ENCODE measurements at regions of chr12 and their contacts with region 1.

Region 1: GRCh38 chr12:109573029-109573913 is at the starts of genes MMAB and MVK:
- DNase-seq: peak; percentile 92
- ATAC-seq: peak; percentile 94
- H3K4me3 Mint-ChIP-seq: peak within 1 kb of the TSS; percentile 93
- H3K27ac Mint-ChIP-seq: peak within 1 kb of the TSS; percentile 90
- H3K4me1 Mint-ChIP-seq: peaks cover 25% of the 10 kb centered on the region
- H3K27me3 Mint-ChIP-seq: no peaks in the 10 kb centered on the region
- CTCF ChIP-seq: no peak
- total RNA-seq, gene MMAB: 62.8 and 63.3 TPM in 2 replicates
- total RNA-seq, gene MVK: 28.5 and 30.3 TPM in 2 replicates

Region 2: GRCh38 chr12:107903341-107904061 is 1669.8 kb before region 1 on chr12:
- CTCF ChIA-PET with region 1: no interaction called
- POLR2A ChIA-PET with region 1: no interaction called
- intact Hi-C with region 1: loop called (anchors 10 kb)
- DNase-seq: peak; percentile 64
- ATAC-seq: peak; percentile 99
- H3K4me3 Mint-ChIP-seq: peak overlapping the region; percentile 81
- H3K27ac Mint-ChIP-seq: peak overlapping the region; percentile 66
- H3K4me1 Mint-ChIP-seq: peaks cover 12% of the 10 kb centered on the region
- H3K27me3 Mint-ChIP-seq: peaks cover 27% of the 10 kb centered on the region
- CTCF ChIP-seq: no peak

Region 3: DNA sequence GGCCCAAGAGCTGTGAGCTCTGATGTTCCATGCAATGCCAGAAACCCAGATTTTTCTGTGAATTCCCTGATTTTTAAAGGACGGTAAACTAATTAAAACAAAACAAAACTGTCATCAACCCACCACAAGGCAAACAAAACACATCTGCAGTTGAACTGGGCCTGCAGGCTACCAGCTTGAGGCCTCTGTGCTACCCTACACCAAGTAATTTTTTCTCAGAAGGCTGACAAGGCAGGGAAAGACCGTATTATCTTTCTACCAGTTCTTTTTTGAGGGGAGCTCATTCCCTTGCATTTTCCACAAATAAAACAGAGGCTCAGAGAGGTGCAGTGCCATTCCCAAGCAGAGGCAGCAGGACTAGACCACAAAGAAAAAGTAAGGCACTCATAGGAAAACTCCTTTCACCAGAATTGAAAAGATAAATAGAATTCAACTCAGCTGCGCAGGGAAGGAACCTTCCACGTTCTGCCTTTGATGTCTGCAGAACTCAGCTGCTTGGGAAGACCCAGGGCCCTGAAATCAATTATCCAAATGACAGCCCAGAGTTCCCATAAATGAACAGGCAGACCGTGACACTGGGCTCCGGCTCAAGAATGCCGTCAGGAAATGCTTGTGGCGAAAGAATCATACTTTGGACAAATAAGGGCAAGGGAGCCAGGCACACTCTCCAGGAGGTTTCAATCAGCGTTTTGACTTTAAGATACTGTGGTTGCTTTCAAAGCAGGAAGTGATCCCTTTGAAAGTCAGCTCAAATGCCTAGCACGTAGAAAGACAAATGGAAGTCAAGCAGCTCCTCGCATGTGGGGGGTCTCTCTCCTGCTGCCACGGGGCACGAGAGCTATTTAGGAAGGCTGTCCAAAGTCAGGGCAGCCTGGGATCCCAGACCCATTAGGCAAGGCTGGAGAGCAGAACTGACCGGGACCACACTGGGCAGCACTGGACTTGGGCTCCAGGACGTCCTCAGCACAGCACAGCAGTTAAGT is 110.3 kb before region 1 on chr12:
- CTCF ChIA-PET with region 1: no interaction called
- POLR2A ChIA-PET with region 1: no interaction called
- intact Hi-C with region 1: loop called (anchors 5 kb)
- DNase-seq: no peak
- ATAC-seq: no peak
- H3K4me3 Mint-ChIP-seq: no peak overlapping the region
- H3K27ac Mint-ChIP-seq: no peak overlapping the region
- H3K4me1 Mint-ChIP-seq: peaks cover 11% of the 10 kb centered on the region
- H3K27me3 Mint-ChIP-seq: no peaks in the 10 kb centered on the region
- CTCF ChIP-seq: no peak

Region 4: GRCh38 chr12:109477185-109477962 is 95.9 kb before region 1 on chr12 and contains the starts of genes KCTD10 and UBE3B:
- CTCF ChIA-PET with region 1: no interaction called
- POLR2A ChIA-PET with region 1: interaction called, 5 read pairs
- intact Hi-C with region 1: loop called (anchors 1 kb)
- DNase-seq: peak; percentile 84
- ATAC-seq: peak; percentile 94
- H3K4me3 Mint-ChIP-seq: peak within 1 kb of the TSS; percentile 99
- H3K27ac Mint-ChIP-seq: peak within 1 kb of the TSS; percentile 98
- H3K4me1 Mint-ChIP-seq: peaks cover 38% of the 10 kb centered on the region
- H3K27me3 Mint-ChIP-seq: no peaks in the 10 kb centered on the region
- CTCF ChIP-seq: no peak
- total RNA-seq, gene KCTD10: 32.7 and 38.7 TPM in 2 replicates
- total RNA-seq, gene UBE3B: 35.4 and 36.9 TPM in 2 replicates

Region 5: DNA sequence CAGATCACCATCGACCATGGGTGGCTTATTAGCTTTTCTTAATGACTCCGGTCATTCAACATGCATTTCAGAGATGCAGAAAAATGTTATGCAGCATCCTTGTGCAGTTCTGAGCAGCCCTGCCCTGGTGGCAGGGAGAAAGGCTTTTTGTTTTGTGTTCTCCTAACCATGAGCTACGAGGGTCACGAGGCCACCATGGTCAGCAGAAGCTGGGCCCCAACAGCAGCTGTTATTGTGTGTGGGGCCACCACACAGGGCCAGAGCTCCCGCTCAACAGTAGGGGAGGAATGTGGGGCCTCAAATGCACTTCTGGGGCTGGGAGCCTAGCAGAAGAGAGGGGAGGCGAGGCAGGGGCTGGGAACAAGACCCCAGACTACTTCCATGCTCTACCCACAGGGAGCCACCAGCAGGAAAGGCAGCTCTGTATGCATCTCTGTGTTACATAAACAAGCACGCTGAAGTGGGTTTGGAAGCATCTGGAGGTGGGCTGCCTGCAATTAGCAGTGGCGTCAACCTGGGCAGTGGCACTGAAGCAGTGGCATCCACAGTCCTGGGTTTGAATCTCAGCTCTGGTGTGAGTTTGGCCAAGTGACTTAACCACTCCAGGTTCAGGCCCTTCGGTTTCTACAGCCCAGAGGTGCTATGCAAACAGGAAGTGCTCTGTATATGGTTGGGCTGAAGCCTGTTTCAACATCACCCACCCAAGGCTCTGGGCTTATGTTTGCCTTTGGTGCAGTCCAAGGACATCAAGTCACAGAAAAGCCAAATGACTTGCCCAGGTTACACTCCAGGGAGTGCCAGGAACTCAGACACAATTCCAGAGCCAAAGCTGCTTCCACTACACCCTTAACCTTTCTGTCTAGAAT is 290.8 kb after region 1 on chr12:
- CTCF ChIA-PET with region 1: no interaction called
- POLR2A ChIA-PET with region 1: no interaction called
- intact Hi-C with region 1: no loop called
- DNase-seq: no peak
- ATAC-seq: no peak
- H3K4me3 Mint-ChIP-seq: no peak overlapping the region
- H3K27ac Mint-ChIP-seq: peak overlapping the region; percentile 18
- H3K4me1 Mint-ChIP-seq: peaks cover 15% of the 10 kb centered on the region
- H3K27me3 Mint-ChIP-seq: no peaks in the 10 kb centered on the region
- CTCF ChIP-seq: no peak